ENCODE measurements at regions of chr4 and their contacts with region 1.

Region 1: GRCh38 chr4:108072300-108072699 is 82.6 kb downstream of the HADH start:
- DNase-seq: peak; percentile 50 to 86 (median 70)
- ATAC-seq: peak; percentile 83
- H3K4me3 ChIP-seq: no peak overlapping the region
- H3K4me3 Mint-ChIP-seq: peak overlapping the region; percentile 44
- H3K27ac ChIP-seq: peak overlapping the region; percentile 49 to 86
- H3K27ac Mint-ChIP-seq: peak overlapping the region; percentile 88
- H3K4me1 ChIP-seq: peaks cover 28% of the 10 kb centered on the region
- H3K4me1 Mint-ChIP-seq: peaks cover 81% of the 10 kb centered on the region
- H3K27me3 ChIP-seq: no peaks in the 10 kb centered on the region
- H3K27me3 Mint-ChIP-seq: no peaks in the 10 kb centered on the region
- CTCF ChIP-seq: no peak

Region 2: GRCh38 chr4:108036213-108036612 is 36.1 kb before region 1 on chr4:
- CTCF ChIA-PET with region 1: interaction called, 6 read pairs
- POLR2A ChIA-PET with region 1: interaction called, 11 read pairs
- intact Hi-C with region 1: loop called in 1 of 2 experiments (anchors 2 kb)
- DNase-seq: peak; percentile 50 to 88 (median 70)
- ATAC-seq: peak; percentile 97
- H3K4me3 ChIP-seq: no peak overlapping the region
- H3K4me3 Mint-ChIP-seq: peak overlapping the region; percentile 70
- H3K27ac ChIP-seq: peak overlapping the region; percentile 37 to 68
- H3K27ac Mint-ChIP-seq: peak overlapping the region; percentile 97
- H3K4me1 ChIP-seq: peaks cover 29% of the 10 kb centered on the region
- H3K4me1 Mint-ChIP-seq: peaks cover 63% of the 10 kb centered on the region
- H3K27me3 ChIP-seq: no peaks in the 10 kb centered on the region
- H3K27me3 Mint-ChIP-seq: no peaks in the 10 kb centered on the region
- CTCF ChIP-seq: no peak

Region 3: GRCh38 chr4:108045694-108046038 is 26.6 kb before region 1 on chr4:
- CTCF ChIA-PET with region 1: interaction called, 3 read pairs
- POLR2A ChIA-PET with region 1: interaction called, 6 read pairs
- intact Hi-C with region 1: loop called in 1 of 2 experiments (anchors 2 kb)
- DNase-seq: peak in 2 of 14 experiments; percentile 40 to 41
- ATAC-seq: peak; percentile 21
- H3K4me3 ChIP-seq: no peak overlapping the region
- H3K4me3 Mint-ChIP-seq: no peak overlapping the region
- H3K27ac ChIP-seq: peak overlapping the region; percentile 14 to 49
- H3K27ac Mint-ChIP-seq: peak overlapping the region; percentile 93
- H3K4me1 ChIP-seq: peaks cover 31% of the 10 kb centered on the region
- H3K4me1 Mint-ChIP-seq: peaks cover 69% of the 10 kb centered on the region
- H3K27me3 ChIP-seq: no peaks in the 10 kb centered on the region
- H3K27me3 Mint-ChIP-seq: no peaks in the 10 kb centered on the region
- CTCF ChIP-seq: no peak

Region 4: GRCh38 chr4:108060164-108060563 is 12.1 kb before region 1 on chr4:
- CTCF ChIA-PET with region 1: interaction called, 5 read pairs
- POLR2A ChIA-PET with region 1: interaction called, 17 read pairs
- intact Hi-C with region 1: no loop called
- DNase-seq: peak in 3 of 14 experiments; percentile 42 to 48 (median 48)
- ATAC-seq: no peak
- H3K4me3 ChIP-seq: no peak overlapping the region
- H3K4me3 Mint-ChIP-seq: no peak overlapping the region
- H3K27ac ChIP-seq: peak overlapping the region in 1 of 2 donors; percentile 38
- H3K27ac Mint-ChIP-seq: peak overlapping the region; percentile 93
- H3K4me1 ChIP-seq: peaks cover 52% of the 10 kb centered on the region
- H3K4me1 Mint-ChIP-seq: peaks cover 94% of the 10 kb centered on the region
- H3K27me3 ChIP-seq: no peaks in the 10 kb centered on the region
- H3K27me3 Mint-ChIP-seq: no peaks in the 10 kb centered on the region
- CTCF ChIP-seq: peak; percentile 12

Region 5: DNA sequence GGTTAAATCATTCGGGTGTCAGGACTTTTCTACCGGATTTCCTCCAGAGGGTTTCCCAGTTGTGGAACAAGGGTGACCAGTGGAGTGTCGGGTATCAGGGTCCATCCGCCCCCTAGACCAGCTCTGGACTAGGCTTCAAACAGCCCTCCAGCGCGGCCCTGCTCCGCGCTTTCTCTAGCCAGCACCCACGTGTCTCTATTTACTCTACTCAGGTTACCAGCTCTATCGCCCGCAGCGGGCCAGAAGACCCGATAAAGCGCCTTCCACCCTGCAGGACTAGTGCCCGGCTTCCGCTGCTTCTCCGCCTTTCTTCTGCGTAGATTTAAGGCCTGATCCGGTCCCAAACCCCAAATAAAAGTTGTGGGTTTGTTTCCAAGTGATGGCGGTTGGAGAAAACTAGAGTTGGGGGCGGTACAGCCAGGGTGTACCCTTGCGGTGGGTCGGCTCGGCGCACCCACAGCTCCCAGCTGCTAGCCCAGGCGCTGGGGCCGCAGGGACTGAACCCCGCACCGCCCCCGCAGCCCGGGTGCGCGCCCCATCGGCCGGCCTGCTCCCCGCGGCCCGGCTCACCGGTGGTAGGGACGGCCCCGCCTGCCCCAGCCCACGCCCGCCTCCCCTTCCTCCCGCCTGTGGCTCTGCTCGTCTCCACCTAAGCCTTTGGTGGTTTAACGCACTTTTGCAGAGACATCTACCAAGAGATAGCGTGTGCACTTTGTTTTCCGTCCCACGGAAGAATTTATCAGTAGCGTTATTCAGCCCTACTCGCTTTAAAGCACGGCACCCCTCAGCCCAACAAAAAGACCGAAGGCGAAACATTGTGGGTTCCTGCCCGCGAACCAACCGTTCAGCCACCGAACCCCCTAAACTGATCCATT is 94.4 kb after region 1 on chr4:
- CTCF ChIA-PET with region 1: no interaction called
- POLR2A ChIA-PET with region 1: interaction called, 7 read pairs
- intact Hi-C with region 1: loop called in 1 of 2 experiments (anchors 2 kb)
- DNase-seq: peak; percentile 34 to 83 (median 60)
- ATAC-seq: peak; percentile 18
- H3K4me3 ChIP-seq: peak overlapping the region; percentile 76
- H3K4me3 Mint-ChIP-seq: peak overlapping the region; percentile 99
- H3K27ac ChIP-seq: peak overlapping the region; percentile 53 to 80
- H3K27ac Mint-ChIP-seq: peak overlapping the region; percentile 88
- H3K4me1 ChIP-seq: peaks cover 45% of the 10 kb centered on the region
- H3K4me1 Mint-ChIP-seq: peaks cover 45% of the 10 kb centered on the region
- H3K27me3 ChIP-seq: peaks cover 7 to 11% of the 10 kb centered on the region in 2 experiments
- H3K27me3 Mint-ChIP-seq: peaks cover 9% of the 10 kb centered on the region
- CTCF ChIP-seq: no peak